CD8-positive, alpha-beta memory T cell (primary cell): ENCODE measurements at regions of chr5 and their contacts with region 1.

Region 1: GRCh38 chr5:131382407-131383395 is 118.8 kb downstream of the CDC42SE2 start:
- DNase-seq: peak; percentile 24 to 79 (median 72)
- H3K4me3 ChIP-seq: no peak overlapping the region
- H3K4me3 Mint-ChIP-seq: peak overlapping the region; percentile 51 to 82 (median 69)
- H3K27ac ChIP-seq: peak overlapping the region; percentile 29
- H3K27ac Mint-ChIP-seq: peak overlapping the region; percentile 94 to 99 (median 97)
- H3K4me1 ChIP-seq: peaks cover 77% of the 10 kb centered on the region
- H3K4me1 Mint-ChIP-seq: peaks cover 83 to 100% (median 93%) of the 10 kb centered on the region in 3 donors
- H3K27me3 ChIP-seq: no peaks in the 10 kb centered on the region
- H3K27me3 Mint-ChIP-seq: peaks cover 0 to 1% of the 10 kb centered on the region in 2 donors

Region 2: DNA sequence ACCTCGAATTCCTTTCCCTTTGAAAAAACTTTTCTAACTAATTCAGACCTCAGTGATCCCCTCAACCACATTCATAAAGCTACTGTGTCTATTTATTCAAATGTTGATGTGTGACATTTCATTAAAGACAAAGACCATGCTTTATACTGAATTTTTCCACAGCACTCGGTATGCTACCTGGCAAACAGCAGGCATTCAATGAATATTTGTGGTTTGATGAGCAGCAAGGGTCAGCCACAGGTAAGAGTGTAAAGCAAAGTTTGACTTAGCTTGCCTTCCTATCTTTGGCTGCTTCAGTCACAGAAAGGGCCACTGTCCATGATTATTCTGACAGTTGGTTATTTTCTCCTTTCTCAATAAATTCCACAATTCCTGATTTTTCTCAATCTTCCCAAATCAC is 124.0 kb before region 1 on chr5:
- CTCF ChIA-PET with region 1: interaction called, 59 read pairs
- POLR2A ChIA-PET with region 1: interaction called, 32 read pairs
- DNase-seq: no peak
- H3K4me3 ChIP-seq: peak overlapping the region; percentile 13
- H3K4me3 Mint-ChIP-seq: peak overlapping the region; percentile 77 to 86 (median 85)
- H3K27ac ChIP-seq: no peak overlapping the region
- H3K27ac Mint-ChIP-seq: peak overlapping the region; percentile 78 to 98 (median 94)
- H3K4me1 ChIP-seq: peaks cover 66% of the 10 kb centered on the region
- H3K4me1 Mint-ChIP-seq: peaks cover 66 to 83% (median 82%) of the 10 kb centered on the region in 3 donors
- H3K27me3 ChIP-seq: no peaks in the 10 kb centered on the region
- H3K27me3 Mint-ChIP-seq: no peaks in the 10 kb centered on the region

Region 3: GRCh38 chr5:131289738-131290137 is 93.0 kb before region 1 on chr5:
- CTCF ChIA-PET with region 1: interaction called, 12 read pairs
- POLR2A ChIA-PET with region 1: interaction called, 10 read pairs
- DNase-seq: no peak
- H3K4me3 ChIP-seq: peak overlapping the region; percentile 26
- H3K4me3 Mint-ChIP-seq: peak overlapping the region; percentile 60 to 89 (median 86)
- H3K27ac ChIP-seq: no peak overlapping the region
- H3K27ac Mint-ChIP-seq: peak overlapping the region; percentile 82 to 99 (median 92)
- H3K4me1 ChIP-seq: peaks cover 86% of the 10 kb centered on the region
- H3K4me1 Mint-ChIP-seq: peaks cover 71 to 93% (median 90%) of the 10 kb centered on the region in 3 donors
- H3K27me3 ChIP-seq: no peaks in the 10 kb centered on the region
- H3K27me3 Mint-ChIP-seq: no peaks in the 10 kb centered on the region

Region 4: GRCh38 chr5:131357739-131358561 is 24.8 kb before region 1 on chr5:
- CTCF ChIA-PET with region 1: interaction called, 19 read pairs
- POLR2A ChIA-PET with region 1: interaction called, 9 read pairs
- DNase-seq: no peak
- H3K4me3 ChIP-seq: no peak overlapping the region
- H3K4me3 Mint-ChIP-seq: peak overlapping the region in 6 of 7 donors; percentile 7 to 70 (median 30)
- H3K27ac ChIP-seq: no peak overlapping the region
- H3K27ac Mint-ChIP-seq: peak overlapping the region; percentile 74 to 96 (median 86)
- H3K4me1 ChIP-seq: peaks cover 49% of the 10 kb centered on the region
- H3K4me1 Mint-ChIP-seq: peaks cover 64 to 93% (median 83%) of the 10 kb centered on the region in 3 donors
- H3K27me3 ChIP-seq: no peaks in the 10 kb centered on the region
- H3K27me3 Mint-ChIP-seq: no peaks in the 10 kb centered on the region